ENCODE measurements at regions of chr11 and their contacts with region 1.

Region 1: GRCh38 chr11:129364143-129364654 is 11.4 kb upstream of the BARX2 start:
- DNase-seq: peak; percentile 57 to 89 (median 79)

Region 2: DNA sequence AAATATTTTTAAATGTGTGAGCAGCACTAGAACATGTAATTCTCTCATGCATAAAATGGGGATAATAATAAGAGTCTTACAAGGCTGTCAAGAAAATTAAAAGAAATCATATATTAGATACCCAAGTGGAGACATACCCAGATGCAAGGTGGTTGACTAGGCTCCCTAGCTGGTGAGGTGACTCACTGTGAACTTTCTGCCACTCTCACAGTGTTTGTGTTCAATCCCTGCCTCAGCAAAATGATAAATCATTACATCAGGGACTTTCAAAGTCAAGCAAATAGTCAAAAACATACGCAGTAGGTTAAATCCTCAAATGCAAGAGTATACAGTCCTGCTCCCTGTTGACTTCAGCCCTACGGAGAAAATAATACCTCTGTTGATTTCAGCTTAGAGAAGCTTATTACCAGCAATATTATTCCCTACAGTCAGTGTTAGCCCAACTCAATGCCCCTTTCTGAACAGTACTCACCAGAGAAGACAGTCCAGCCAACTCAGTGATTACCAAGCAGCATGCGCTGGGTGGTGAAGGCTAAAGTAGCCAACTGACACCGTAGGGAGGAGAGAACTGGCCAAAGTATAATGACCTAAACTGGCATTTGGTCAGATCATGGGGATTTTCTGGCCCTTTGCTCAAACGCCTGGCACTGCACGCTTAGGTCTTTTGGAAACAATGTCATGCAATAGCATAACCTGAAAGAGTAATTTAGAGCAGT is 61.7 kb before region 1 on chr11:
- intact Hi-C with region 1: no loop called
- DNase-seq: no peak

Region 3: DNA sequence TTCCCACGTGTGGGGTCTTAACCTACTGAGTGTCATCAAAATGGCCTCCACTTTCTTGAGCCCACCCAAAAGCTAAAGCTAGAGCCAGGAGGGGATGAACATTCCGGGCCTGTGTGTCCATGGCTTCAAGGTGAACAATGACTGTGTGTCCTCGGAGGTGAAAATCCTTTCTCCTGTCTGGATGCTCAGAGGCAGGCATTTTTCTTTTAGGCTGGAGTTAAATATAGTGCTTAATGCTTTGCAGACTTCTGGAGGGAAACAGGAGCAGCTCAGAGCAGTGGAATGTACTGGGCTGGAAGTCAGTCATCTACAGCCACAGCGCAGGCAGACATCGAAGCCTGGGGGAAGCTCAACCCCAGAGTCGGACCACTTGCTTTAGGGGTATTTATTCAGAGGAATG is 382.9 kb after region 1 on chr11:
- intact Hi-C with region 1: loop called (anchors 5 kb)
- DNase-seq: peak in 1 of 42 donors; percentile 6

Region 4: DNA sequence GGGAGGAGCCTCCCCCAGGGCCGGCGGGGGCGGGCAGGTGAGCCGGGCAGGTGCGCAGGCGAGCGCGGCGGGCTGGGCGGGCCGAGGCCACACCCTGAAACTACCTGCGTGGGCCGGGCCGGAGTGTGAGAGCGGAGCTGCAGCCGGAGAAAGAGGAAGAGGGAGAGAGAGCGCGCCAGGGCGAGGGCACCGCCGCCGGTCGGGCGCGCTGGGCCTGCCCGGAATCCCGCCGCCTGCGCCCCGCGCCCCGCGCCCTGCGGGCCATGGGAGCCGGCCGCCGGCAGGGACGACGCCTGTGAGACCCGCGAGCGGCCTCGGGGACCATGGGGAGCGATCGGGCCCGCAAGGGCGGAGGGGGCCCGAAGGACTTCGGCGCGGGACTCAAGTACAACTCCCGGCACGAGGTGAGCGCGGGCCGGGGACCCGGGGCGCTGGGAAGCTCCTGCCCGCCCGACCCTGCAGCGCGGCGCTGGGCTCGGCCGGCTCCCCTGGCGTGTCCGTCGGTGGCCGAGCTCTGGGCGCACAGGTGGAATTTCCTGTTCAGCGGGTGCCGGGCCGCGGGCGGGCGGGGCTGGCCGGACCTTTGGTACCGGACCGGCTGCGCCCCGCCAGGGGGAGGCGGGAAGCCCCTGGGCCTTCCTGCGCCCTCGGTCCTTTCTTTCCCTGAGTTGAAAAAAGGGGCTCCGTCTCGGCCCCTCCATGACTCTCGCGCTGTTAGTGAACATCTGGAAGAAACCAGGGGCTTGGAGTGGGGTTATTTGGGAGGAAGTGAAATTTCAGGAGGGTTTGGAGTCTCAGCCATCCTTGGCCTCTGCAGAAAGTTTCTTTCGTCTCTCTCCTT is 795.7 kb after region 1 on chr11 and contains the start of gene ST14:
- intact Hi-C with region 1: no loop called
- DNase-seq: no peak